ENCODE measurements at regions of chr5 and their contacts with region 1.

Region 1: GRCh38 chr5:154287136-154287535 is 96.6 kb downstream of the GALNT10 start:
- DNase-seq: peak; percentile 47
- H3K4me3 ChIP-seq: no peak overlapping the region
- H3K27ac ChIP-seq: peak overlapping the region; percentile 60 to 68 (median 62)
- H3K4me1 ChIP-seq: peaks cover 27 to 45% (median 43%) of the 10 kb centered on the region in 4 donors
- H3K27me3 ChIP-seq: no peaks in the 10 kb centered on the region
- CTCF ChIP-seq: no peak
- EP300 ChIP-seq: no peak
- POLR2A ChIP-seq: no peak

Region 2: GRCh38 chr5:154189819-154190594 is 97.1 kb before region 1 on chr5:
- intact Hi-C with region 1: loop called (anchors 5 kb)
- DNase-seq: peak; percentile 95
- H3K4me3 ChIP-seq: peak overlapping the region; percentile 76 to 98 (median 94)
- H3K27ac ChIP-seq: peak overlapping the region; percentile 79 to 83 (median 79)
- H3K4me1 ChIP-seq: peaks cover 22 to 57% (median 52%) of the 10 kb centered on the region in 4 donors
- H3K27me3 ChIP-seq: no peaks in the 10 kb centered on the region
- CTCF ChIP-seq: peak in 2 of 3 experiments; percentile 7 to 42
- EP300 ChIP-seq: no peak
- POLR2A ChIP-seq: no peak

Region 3: GRCh38 chr5:154368041-154368800 is 81.1 kb after region 1 on chr5:
- intact Hi-C with region 1: loop called (anchors 10 kb)
- DNase-seq: no peak
- H3K4me3 ChIP-seq: no peak overlapping the region
- H3K27ac ChIP-seq: peak overlapping the region; percentile 46 to 62 (median 50)
- H3K4me1 ChIP-seq: peaks cover 44 to 78% (median 72%) of the 10 kb centered on the region in 4 donors
- H3K27me3 ChIP-seq: no peaks in the 10 kb centered on the region
- CTCF ChIP-seq: no peak
- EP300 ChIP-seq: no peak
- POLR2A ChIP-seq: no peak

Measured in esophagus muscularis mucosa (tissue), 4 donors.